ENCODE measurements at regions of chr5 and their contacts with region 1.

Region 1: DNA sequence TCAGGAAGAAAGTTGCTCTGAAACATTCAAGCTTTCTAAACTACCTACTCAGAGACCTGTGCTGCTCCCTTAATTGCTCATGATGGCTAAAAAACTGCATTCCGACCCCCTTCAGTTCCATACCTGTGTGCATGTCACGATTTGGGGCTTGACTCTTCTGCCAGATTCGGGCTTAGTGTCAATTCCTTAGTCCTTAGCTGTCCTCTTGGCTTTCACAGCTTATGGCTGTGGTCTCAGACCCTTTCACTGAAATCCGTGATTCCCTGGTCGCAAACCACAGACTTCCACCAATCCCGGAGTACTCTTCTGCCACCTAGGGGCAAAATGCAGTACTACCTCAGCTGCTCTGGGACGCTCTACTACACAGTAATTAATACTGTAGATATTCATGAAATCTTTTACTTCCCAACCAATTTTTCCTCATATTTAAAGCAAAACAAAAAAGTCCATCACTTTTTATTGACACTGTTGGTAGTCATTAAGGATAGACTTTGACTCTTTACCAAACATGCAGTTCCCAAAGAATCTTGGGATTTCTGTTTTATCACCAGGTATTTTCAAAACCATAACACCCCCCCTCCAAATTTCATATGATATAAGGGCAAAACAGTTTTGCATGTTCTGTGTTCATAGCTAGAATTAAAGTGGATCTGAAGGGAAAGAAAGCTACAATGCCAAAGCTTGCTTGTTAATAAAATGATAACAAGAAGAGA is 617.4 kb downstream of the SLCO4C1 start:
- DNase-seq: peak; percentile 81 to 86
- H3K4me3 ChIP-seq: peak overlapping the region; percentile 31
- H3K4me3 Mint-ChIP-seq: peak overlapping the region; percentile 85
- H3K27ac Mint-ChIP-seq: peak overlapping the region; percentile 94
- H3K4me1 ChIP-seq: peaks cover 6% of the 10 kb centered on the region; the same call in 1 of the 2 replicates
- H3K4me1 Mint-ChIP-seq: peaks cover 11% of the 10 kb centered on the region
- H3K27me3 ChIP-seq: no peaks in the 10 kb centered on the region
- H3K27me3 Mint-ChIP-seq: no peaks in the 10 kb centered on the region
- CTCF ChIP-seq: peak; percentile 90 to 92

Region 2: GRCh38 chr5:100479079-100479688 is 1199.5 kb before region 1 on chr5:
- CTCF ChIA-PET with region 1: no interaction called
- POLR2A ChIA-PET with region 1: no interaction called
- intact Hi-C with region 1: loop called (anchors 1 kb)
- DNase-seq: peak in 1 of 2 experiments; percentile 46
- H3K4me3 ChIP-seq: no peak overlapping the region
- H3K4me3 Mint-ChIP-seq: no peak overlapping the region
- H3K27ac Mint-ChIP-seq: no peak overlapping the region
- H3K4me1 ChIP-seq: no peaks in the 10 kb centered on the region
- H3K4me1 Mint-ChIP-seq: no peaks in the 10 kb centered on the region
- H3K27me3 ChIP-seq: no peaks in the 10 kb centered on the region
- H3K27me3 Mint-ChIP-seq: no peaks in the 10 kb centered on the region
- CTCF ChIP-seq: peak; percentile 60 to 73

Region 3: DNA sequence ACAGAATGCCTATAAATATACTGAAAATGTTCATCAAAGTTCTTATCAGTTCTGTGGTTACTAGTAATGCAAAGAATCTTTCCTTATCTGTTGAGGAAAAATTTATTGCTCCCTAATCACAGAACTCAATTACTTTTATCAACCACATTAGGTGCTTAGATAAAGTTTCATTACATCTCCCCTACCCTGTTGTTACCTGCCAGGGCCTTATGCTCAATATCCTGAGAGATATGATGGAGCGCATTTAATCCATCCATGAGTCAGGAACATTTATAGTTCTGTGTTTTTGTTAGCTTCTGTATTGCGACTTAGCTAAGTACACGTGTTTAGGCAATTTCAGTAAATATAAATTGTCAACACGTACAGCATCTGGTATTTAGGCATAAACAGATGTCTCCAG is 611.2 kb before region 1 on chr5:
- CTCF ChIA-PET with region 1: no interaction called
- POLR2A ChIA-PET with region 1: no interaction called
- intact Hi-C with region 1: loop called (anchors 10 kb)
- DNase-seq: peak in 1 of 2 experiments; percentile 7
- H3K4me3 ChIP-seq: no peak overlapping the region
- H3K4me3 Mint-ChIP-seq: no peak overlapping the region
- H3K27ac Mint-ChIP-seq: no peak overlapping the region
- H3K4me1 ChIP-seq: peaks cover 12% of the 10 kb centered on the region; the same call in 1 of the 2 replicates
- H3K4me1 Mint-ChIP-seq: peaks cover 10% of the 10 kb centered on the region
- H3K27me3 ChIP-seq: no peaks in the 10 kb centered on the region
- H3K27me3 Mint-ChIP-seq: no peaks in the 10 kb centered on the region
- CTCF ChIP-seq: no peak

Region 4: DNA sequence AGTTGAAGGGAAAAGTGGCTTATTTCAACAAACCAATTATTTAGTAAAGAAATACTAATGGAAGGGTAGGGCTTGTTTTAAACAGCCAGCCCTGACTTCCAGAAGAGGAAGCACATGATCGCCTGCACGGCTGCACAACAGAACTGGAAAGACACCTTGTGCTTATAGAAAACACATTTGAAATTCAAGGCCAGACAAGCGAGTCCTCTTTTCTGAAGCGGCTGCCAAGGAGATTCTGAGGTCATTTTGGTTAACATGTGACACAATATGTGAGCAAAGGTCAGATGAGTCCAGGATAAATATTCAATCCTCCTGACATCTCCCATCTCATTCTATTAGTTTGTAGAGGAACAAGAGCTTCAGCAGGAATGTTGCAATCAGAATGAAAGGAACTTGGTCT is 314.2 kb before region 1 on chr5:
- CTCF ChIA-PET with region 1: no interaction called
- POLR2A ChIA-PET with region 1: no interaction called
- intact Hi-C with region 1: loop called (anchors 1 kb)
- DNase-seq: no peak
- H3K4me3 ChIP-seq: no peak overlapping the region
- H3K4me3 Mint-ChIP-seq: no peak overlapping the region
- H3K27ac Mint-ChIP-seq: no peak overlapping the region
- H3K4me1 ChIP-seq: no peaks in the 10 kb centered on the region
- H3K4me1 Mint-ChIP-seq: no peaks in the 10 kb centered on the region
- H3K27me3 ChIP-seq: no peaks in the 10 kb centered on the region
- H3K27me3 Mint-ChIP-seq: no peaks in the 10 kb centered on the region
- CTCF ChIP-seq: no peak

Region 5: DNA sequence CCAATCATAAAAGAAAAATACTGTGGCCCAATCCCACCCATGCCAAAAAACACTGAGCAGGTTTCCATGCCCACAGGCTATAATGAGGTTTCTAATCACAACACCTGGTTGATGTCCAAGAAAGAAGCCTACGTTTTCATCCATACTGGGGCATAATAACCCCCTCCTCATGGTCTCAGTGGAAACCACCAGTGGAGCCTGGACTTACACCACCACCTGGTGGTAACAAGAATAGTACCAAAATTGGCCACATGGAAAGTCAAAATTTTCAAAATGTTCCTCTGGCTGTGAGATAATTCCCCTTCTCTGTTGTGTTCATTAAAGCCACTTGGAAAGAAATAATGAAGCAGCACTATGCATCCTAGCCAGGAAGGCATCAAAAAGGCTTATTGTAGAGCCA is 88.3 kb before region 1 on chr5:
- CTCF ChIA-PET with region 1: no interaction called
- POLR2A ChIA-PET with region 1: no interaction called
- intact Hi-C with region 1: loop called (anchors 5 kb)
- DNase-seq: peak in 1 of 2 experiments; percentile 13
- H3K4me3 ChIP-seq: no peak overlapping the region
- H3K4me3 Mint-ChIP-seq: no peak overlapping the region
- H3K27ac Mint-ChIP-seq: no peak overlapping the region
- H3K4me1 ChIP-seq: no peaks in the 10 kb centered on the region
- H3K4me1 Mint-ChIP-seq: no peaks in the 10 kb centered on the region
- H3K27me3 ChIP-seq: no peaks in the 10 kb centered on the region
- H3K27me3 Mint-ChIP-seq: no peaks in the 10 kb centered on the region
- CTCF ChIP-seq: peak; percentile 39 to 41

Region 6: GRCh38 chr5:101977729-101978345 is 299.2 kb after region 1 on chr5:
- CTCF ChIA-PET with region 1: no interaction called
- POLR2A ChIA-PET with region 1: no interaction called
- intact Hi-C with region 1: loop called (anchors 5 kb)
- DNase-seq: peak in 1 of 2 experiments; percentile 52
- H3K4me3 ChIP-seq: no peak overlapping the region
- H3K4me3 Mint-ChIP-seq: no peak overlapping the region
- H3K27ac Mint-ChIP-seq: no peak overlapping the region
- H3K4me1 ChIP-seq: no peaks in the 10 kb centered on the region
- H3K4me1 Mint-ChIP-seq: no peaks in the 10 kb centered on the region
- H3K27me3 ChIP-seq: no peaks in the 10 kb centered on the region
- H3K27me3 Mint-ChIP-seq: peaks cover 3% of the 10 kb centered on the region
- CTCF ChIP-seq: peak; percentile 66 to 70

Measured in Caco-2 (cell line).